A673 (cell line): ENCODE measurements at regions of chr22 and their contacts with region 1.

Region 1: DNA sequence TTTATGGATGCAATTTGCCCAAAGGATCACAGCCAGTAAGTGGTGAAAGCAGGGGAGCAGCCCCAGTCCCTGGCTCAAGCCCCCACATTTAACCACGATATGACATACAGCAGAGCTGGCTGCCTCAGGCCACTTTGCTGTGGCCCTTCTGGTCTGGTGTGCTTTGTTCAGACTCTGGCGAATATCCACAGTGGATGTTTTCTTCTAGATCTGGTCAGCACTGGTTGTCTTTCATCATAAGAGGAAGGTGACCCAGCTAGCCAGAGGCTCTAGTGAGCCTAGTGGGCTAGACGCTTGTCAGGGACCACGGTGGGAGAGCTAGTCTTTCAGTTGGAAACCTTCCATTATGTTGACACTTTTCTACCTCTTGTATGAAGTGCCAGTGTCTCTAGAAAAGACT is 42.5 kb downstream of the DGCR2 start:
- DNase-seq: no peak
- H3K4me3 ChIP-seq: no peak overlapping the region
- H3K27ac ChIP-seq: peak overlapping the region; percentile 4
- H3K4me1 ChIP-seq: peaks cover 7% of the 10 kb centered on the region
- H3K27me3 ChIP-seq: no peaks in the 10 kb centered on the region
- CTCF ChIP-seq: no peak

Region 2: DNA sequence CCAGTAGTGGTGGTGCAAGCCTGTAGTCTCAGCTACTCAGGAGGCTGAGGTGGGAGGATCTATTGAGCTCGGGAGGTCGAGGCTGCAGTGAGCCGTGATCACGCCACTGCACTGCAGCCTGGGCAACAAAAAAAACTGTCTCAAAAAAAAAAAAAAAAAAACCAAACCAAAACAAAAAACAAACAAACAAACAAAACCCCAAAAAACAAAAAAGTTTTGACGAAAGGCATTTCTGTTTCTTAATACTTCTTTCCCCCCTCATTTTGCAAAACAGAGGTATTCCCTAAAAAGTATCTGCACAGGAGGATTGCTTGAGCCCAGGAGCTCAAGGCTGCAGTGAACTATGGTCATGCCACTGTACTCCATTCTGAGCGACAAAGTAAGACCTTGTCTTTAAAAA is 340.6 kb after region 1 on chr22:
- CTCF ChIA-PET with region 1: no interaction called
- POLR2A ChIA-PET with region 1: interaction called, 12 read pairs
- intact Hi-C with region 1: no loop called
- DNase-seq: no peak
- H3K4me3 ChIP-seq: no peak overlapping the region
- H3K27ac ChIP-seq: no peak overlapping the region
- H3K4me1 ChIP-seq: no peaks in the 10 kb centered on the region
- H3K27me3 ChIP-seq: no peaks in the 10 kb centered on the region
- CTCF ChIP-seq: no peak